ENCODE measurements at regions of chr7 and their contacts with region 1.

Region 1: GRCh38 chr7:1418505-1419309 is 40.6 kb downstream of the MICALL2 start:
- DNase-seq: no peak
- H3K4me3 ChIP-seq: no peak overlapping the region
- H3K27ac ChIP-seq: no peak overlapping the region
- H3K4me1 ChIP-seq: no peaks in the 10 kb centered on the region
- H3K27me3 ChIP-seq: peaks cover 8% of the 10 kb centered on the region
- CTCF ChIP-seq: no peak
- POLR2A ChIP-seq: no peak

Region 2: DNA sequence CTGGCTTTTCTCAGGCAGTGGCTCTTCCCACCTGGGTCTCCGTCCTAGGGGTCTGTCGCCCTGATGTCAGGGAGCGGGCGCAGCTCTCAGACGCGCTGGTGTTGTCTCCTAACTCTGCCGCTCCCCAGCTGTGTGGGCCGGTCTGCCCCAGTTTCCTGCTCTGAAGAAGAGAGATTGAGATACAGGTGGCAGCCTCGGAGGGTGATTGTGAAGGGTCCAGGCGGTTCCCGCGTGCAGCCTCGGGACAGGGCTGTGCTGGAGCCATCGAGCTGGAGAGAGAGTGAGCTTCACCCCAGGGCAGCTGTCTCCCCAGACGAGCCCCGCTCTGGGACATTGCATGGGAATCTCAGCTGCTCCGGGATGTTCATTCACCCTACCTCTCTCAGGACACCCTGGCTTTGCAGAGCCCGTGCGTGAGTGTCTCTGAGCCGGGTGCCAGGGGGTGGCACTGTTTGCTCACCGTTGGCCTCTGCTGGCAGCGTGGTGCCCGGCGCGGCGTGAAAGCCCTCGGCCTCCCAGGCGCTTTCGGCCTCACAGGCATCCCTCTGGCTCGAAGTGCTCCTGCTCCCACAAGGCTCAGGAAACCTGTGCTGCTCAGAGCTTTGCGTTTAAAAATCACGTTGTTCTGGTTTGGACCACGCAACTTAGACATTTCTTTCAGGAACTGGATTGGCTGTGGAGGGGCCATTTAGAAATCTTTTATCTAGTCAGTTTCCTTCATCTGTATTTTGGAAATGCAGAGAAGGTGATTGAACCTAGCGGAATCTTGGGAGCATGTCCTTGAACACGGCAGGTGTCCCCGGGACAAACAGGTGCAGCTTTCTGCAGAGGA is 224.9 kb before region 1 on chr7:
- intact Hi-C with region 1: loop called in 1 of 2 experiments (anchors 5 kb)
- DNase-seq: peak; percentile 65 to 83 (median 76)
- H3K4me3 ChIP-seq: no peak overlapping the region
- H3K27ac ChIP-seq: no peak overlapping the region
- H3K4me1 ChIP-seq: no peaks in the 10 kb centered on the region
- H3K27me3 ChIP-seq: peaks cover 31% of the 10 kb centered on the region
- CTCF ChIP-seq: peak; percentile 26 to 78 (median 60)
- POLR2A ChIP-seq: no peak